ENCODE measurements at regions of chr10 and their contacts with region 1.

Region 1: DNA sequence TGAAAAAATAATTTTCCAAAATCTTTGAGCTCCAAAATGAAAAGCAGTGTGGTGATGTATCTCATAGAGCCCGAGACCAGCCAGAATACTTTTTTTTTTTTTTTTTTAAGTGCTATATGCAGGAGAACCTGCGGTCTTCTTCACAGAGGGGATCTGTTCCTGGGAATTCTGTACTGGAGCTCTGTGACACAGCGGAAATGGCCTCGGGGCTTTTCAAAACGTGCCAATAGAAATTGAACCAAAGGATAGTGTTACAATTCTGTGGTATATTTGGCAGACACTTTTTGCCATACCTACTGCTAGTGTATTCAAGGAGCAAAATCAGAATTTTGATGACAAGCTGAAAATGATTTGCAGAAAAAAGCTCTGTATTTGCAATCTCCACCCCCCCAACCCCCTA is 1429.3 kb upstream of the LRRTM3 start:
- DNase-seq: no peak
- H3K4me3 ChIP-seq: no peak overlapping the region
- H3K27ac ChIP-seq: no peak overlapping the region
- H3K4me1 ChIP-seq: no peaks in the 10 kb centered on the region
- H3K27me3 ChIP-seq: no peaks in the 10 kb centered on the region
- CTCF ChIP-seq: no peak
- POLR2A ChIP-seq: no peak

Region 2: GRCh38 chr10:65083222-65083621 is 413.3 kb before region 1 on chr10:
- CTCF ChIA-PET with region 1: no interaction called
- POLR2A ChIA-PET with region 1: no interaction called
- dilution Hi-C with region 1: no loop called
- intact Hi-C with region 1: no loop called
- DNase-seq: no peak
- H3K4me3 ChIP-seq: no peak overlapping the region
- H3K27ac ChIP-seq: no peak overlapping the region
- H3K4me1 ChIP-seq: no peaks in the 10 kb centered on the region
- H3K27me3 ChIP-seq: no peaks in the 10 kb centered on the region
- CTCF ChIP-seq: no peak
- POLR2A ChIP-seq: no peak

Region 3: GRCh38 chr10:66294538-66294937 is 798.0 kb after region 1 on chr10:
- CTCF ChIA-PET with region 1: no interaction called
- POLR2A ChIA-PET with region 1: no interaction called
- dilution Hi-C with region 1: no loop called
- intact Hi-C with region 1: loop called (anchors 5 kb)
- DNase-seq: no peak
- H3K4me3 ChIP-seq: no peak overlapping the region
- H3K27ac ChIP-seq: no peak overlapping the region
- H3K4me1 ChIP-seq: no peaks in the 10 kb centered on the region
- H3K27me3 ChIP-seq: no peaks in the 10 kb centered on the region
- CTCF ChIP-seq: no peak
- POLR2A ChIP-seq: no peak

Measured in endothelial cell of umbilical vein (primary cell).